PC-9 (cell line): ENCODE measurements at regions of chr3 and their contacts with region 1.

Region 1: DNA sequence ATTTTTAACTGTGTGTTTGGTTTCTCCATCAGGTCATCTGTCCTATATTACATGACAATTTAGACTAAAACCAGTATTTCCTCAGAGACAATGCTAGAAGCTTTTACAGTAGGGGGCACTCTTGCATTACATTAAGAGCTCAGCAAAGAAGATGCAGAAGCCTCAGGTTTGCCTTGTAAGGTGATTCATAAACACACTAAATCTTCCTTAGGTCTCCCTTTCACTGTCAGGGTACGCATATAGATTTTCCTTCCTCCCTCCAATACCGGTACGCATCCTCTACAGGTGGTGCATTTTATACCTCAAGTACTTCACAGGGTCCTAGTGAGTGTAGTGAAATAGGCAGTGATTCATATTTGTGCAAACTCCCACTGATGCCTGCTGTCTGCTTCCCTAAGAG is 46.5 kb downstream of the CD86 start:
- DNase-seq: peak; percentile 7 to 53
- H3K4me3 ChIP-seq: no peak overlapping the region
- H3K27ac ChIP-seq: no peak overlapping the region
- H3K4me1 ChIP-seq: no peaks in the 10 kb centered on the region
- H3K27me3 ChIP-seq: no peaks in the 10 kb centered on the region
- CTCF ChIP-seq: peak; percentile 68

Region 2: DNA sequence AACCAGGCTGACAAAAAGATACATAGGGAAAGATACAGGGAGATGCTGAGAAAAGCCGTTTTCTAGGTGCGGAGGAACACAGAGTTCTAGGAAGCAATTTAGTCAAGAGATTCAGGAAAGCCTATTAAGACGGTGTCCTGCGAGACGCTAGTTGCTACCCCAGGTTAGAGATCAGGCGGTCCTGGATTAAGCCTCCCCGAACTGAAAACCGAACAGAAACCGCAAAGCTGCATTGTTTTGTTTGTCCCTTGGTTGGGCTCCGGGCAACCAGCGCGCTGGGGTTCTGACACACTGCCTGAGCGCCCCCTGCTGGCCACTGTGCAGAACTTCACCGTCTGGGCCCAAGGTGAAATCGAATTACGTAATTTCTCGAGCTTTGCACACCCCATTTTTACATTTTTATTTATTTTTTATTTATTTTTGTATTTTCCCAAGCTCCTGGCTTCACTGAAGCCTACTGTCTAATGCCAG is 1542.8 kb before region 1 on chr3:
- CTCF ChIA-PET with region 1: no interaction called
- POLR2A ChIA-PET with region 1: no interaction called
- intact Hi-C with region 1: no loop called
- DNase-seq: peak; percentile 78 to 87
- H3K4me3 ChIP-seq: peak overlapping the region; percentile 57
- H3K27ac ChIP-seq: no peak overlapping the region
- H3K4me1 ChIP-seq: peaks cover 15% of the 10 kb centered on the region
- H3K27me3 ChIP-seq: no peaks in the 10 kb centered on the region
- CTCF ChIP-seq: peak; percentile 98

Region 3: DNA sequence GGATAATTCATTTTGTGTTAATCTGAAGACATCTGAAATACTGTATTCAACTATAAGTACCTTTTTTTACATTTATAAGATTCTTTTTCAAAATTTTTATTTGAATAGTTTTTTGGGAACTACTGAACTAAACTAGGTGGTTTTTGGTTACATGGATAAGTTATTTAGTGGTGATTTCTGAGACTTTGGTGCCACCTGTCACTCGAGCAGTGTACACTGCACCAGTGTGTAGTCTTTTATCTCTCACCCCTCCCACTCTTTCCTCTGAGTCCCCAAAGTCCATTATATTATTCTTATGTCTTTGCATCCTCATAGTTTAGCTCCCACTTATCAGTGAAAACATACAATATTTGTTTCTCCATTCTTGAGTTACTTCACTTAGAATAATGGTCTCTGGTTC is 11.1 kb after region 1 on chr3:
- CTCF ChIA-PET with region 1: no interaction called
- POLR2A ChIA-PET with region 1: no interaction called
- intact Hi-C with region 1: no loop called
- DNase-seq: no peak
- H3K4me3 ChIP-seq: no peak overlapping the region
- H3K27ac ChIP-seq: no peak overlapping the region
- H3K4me1 ChIP-seq: no peaks in the 10 kb centered on the region
- H3K27me3 ChIP-seq: peaks cover 3% of the 10 kb centered on the region; the same call in 1 of the 2 replicates
- CTCF ChIP-seq: 0 out of 2 replicates have a peak, but pooled peaks have one; percentile 20

Region 4: GRCh38 chr3:122258757-122259371 is 157.2 kb after region 1 on chr3:
- CTCF ChIA-PET with region 1: interaction called, 8 read pairs
- POLR2A ChIA-PET with region 1: no interaction called
- intact Hi-C with region 1: loop called (anchors 1 kb)
- DNase-seq: peak; percentile 37 to 57
- H3K4me3 ChIP-seq: no peak overlapping the region
- H3K27ac ChIP-seq: no peak overlapping the region
- H3K4me1 ChIP-seq: no peaks in the 10 kb centered on the region
- H3K27me3 ChIP-seq: peaks cover 38% of the 10 kb centered on the region
- CTCF ChIP-seq: peak; percentile 65

Region 5: DNA sequence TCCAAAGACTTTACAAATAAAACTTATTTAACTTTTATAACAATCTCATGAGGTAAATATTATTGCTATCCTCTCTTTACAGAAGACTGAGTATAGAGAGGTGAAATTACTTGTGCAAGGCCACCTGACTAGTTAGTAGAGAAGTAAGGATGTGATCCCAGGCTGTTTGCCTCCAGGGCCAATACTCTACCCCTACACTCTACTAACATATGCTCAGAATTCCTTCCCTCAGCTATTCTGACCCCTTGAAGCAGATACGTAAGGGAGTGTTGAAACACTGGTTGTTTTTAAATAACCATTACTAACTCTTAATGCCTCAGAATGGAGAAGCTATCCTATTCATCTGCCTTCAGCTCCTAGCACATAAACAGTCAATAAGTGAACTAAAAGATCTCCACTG is 247.5 kb after region 1 on chr3:
- CTCF ChIA-PET with region 1: no interaction called
- POLR2A ChIA-PET with region 1: no interaction called
- intact Hi-C with region 1: no loop called
- DNase-seq: no peak
- H3K4me3 ChIP-seq: no peak overlapping the region
- H3K27ac ChIP-seq: no peak overlapping the region
- H3K4me1 ChIP-seq: no peaks in the 10 kb centered on the region
- H3K27me3 ChIP-seq: no peaks in the 10 kb centered on the region
- CTCF ChIP-seq: no peak